GM23248 (cell line): ENCODE measurements at regions of chr13 and their contacts with region 1.

Region 1: DNA sequence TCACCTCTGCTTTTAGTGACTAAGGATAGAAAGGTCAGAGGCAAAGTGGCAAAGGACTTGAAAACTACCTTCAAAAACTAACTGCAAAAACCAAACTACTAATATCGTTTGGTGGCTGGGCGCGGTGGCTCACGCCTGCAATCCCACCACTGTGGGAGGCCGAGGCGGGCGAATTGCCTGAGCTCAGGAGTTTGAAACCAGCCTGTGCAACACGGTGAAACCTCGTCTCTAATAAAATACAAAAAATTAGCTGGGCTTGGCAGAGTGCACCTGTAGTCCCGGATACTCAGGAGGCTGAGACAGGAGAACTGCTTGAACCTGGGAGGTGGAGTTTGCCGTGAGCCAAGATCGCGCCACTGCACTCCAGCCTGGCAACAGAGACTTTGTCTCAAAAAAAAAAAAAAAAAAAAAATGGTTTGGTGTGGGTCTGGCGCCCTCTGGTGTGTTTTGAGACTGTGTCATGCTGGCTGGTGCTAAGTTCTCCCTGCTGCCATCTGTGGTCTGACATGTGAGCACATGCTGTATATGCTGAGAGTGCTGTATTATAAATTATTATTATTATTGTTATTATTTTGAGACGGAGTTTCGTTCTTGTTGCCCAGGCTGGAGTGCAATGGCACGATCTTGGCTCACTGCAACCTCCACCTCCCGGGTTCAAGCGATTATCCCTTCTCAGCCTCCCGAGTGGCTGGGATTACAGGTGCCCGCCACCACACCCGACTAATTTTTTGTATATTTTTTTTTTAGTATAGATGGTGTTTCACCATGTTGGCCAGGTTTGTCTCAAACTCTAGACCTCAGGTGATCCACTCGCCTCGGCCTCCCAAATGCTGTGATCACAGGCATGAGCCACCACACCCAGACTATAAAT is 36.0 kb upstream of the RNF17 start:
- DNase-seq: peak; percentile 95
- H3K4me3 ChIP-seq: no peak overlapping the region
- H3K27ac ChIP-seq: no peak overlapping the region
- H3K4me1 ChIP-seq: no peaks in the 10 kb centered on the region
- H3K27me3 ChIP-seq: no peaks in the 10 kb centered on the region; the same call in none of the 2 replicates

Region 2: GRCh38 chr13:24540236-24541126 is 187.5 kb before region 1 on chr13:
- in situ Hi-C with region 1: no loop called
- DNase-seq: no peak
- H3K4me3 ChIP-seq: no peak overlapping the region
- H3K27ac ChIP-seq: no peak overlapping the region
- H3K4me1 ChIP-seq: no peaks in the 10 kb centered on the region
- H3K27me3 ChIP-seq: peaks cover 34% of the 10 kb centered on the region

Region 3: DNA sequence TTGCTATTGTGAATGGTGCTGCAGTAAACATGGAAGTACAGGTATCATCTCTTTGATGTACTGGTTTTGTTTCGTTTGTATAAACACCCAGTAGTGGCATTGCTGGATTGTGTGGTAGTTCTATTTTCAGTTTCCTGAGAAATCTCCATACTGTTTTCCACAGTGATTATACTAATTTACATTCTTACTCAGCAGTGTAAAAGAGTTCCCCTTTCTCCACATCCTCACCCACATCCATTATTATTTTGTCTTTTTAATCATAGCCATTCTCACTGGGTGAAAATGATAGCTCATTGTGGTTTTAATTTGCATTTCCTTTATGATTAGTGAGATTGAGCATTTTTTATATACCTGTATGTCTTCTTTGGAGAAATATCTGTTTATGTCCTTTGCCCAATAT is 153.1 kb before region 1 on chr13:
- in situ Hi-C with region 1: loop called (anchors 10 kb)
- DNase-seq: no peak
- H3K4me3 ChIP-seq: no peak overlapping the region
- H3K27ac ChIP-seq: no peak overlapping the region
- H3K4me1 ChIP-seq: no peaks in the 10 kb centered on the region
- H3K27me3 ChIP-seq: no peaks in the 10 kb centered on the region; the same call in 1 of the 2 replicates

Region 4: DNA sequence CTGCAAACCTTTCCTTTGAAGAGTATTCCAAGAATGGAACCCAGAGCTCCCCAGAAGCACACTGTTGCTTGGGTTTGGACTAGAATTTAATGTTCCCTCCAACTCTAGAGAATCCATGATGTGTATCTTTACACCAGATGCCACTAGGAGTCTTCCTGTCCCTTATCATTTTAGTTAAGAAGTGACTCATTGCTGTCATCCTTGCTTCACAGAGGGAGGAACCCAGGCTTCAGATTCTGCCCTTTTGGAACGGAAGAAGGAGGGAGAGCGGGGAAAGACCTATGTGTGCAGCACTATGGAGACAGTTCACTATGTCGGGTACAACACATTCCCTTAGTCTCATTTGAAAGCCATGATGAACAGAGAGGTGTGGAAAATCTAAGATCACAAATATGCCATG is 49.8 kb before region 1 on chr13:
- in situ Hi-C with region 1: loop called (anchors 5 kb)
- DNase-seq: no peak
- H3K4me3 ChIP-seq: no peak overlapping the region
- H3K27ac ChIP-seq: no peak overlapping the region
- H3K4me1 ChIP-seq: no peaks in the 10 kb centered on the region
- H3K27me3 ChIP-seq: peaks cover 27% of the 10 kb centered on the region